Right ventricle myocardium inferior (tissue), 1 donor: ENCODE measurements at regions of chr21 and their contacts with region 1.

Region 1: GRCh38 chr21:37563641-37564340 is 197.2 kb downstream of the DYRK1A start:
- DNase-seq: peak; percentile 97
- ATAC-seq: peak; percentile 95

Region 2: GRCh38 chr21:37072988-37073416 is 490.8 kb before region 1 on chr21 and contains the starts of genes PIGP and TTC3:
- intact Hi-C with region 1: loop called (anchors 5 kb)
- DNase-seq: peak; percentile 94
- ATAC-seq: peak; percentile 94
- total RNA-seq, gene PIGP: 40.1 TPM
- total RNA-seq, gene TTC3: 35.8 TPM

Region 3: DNA sequence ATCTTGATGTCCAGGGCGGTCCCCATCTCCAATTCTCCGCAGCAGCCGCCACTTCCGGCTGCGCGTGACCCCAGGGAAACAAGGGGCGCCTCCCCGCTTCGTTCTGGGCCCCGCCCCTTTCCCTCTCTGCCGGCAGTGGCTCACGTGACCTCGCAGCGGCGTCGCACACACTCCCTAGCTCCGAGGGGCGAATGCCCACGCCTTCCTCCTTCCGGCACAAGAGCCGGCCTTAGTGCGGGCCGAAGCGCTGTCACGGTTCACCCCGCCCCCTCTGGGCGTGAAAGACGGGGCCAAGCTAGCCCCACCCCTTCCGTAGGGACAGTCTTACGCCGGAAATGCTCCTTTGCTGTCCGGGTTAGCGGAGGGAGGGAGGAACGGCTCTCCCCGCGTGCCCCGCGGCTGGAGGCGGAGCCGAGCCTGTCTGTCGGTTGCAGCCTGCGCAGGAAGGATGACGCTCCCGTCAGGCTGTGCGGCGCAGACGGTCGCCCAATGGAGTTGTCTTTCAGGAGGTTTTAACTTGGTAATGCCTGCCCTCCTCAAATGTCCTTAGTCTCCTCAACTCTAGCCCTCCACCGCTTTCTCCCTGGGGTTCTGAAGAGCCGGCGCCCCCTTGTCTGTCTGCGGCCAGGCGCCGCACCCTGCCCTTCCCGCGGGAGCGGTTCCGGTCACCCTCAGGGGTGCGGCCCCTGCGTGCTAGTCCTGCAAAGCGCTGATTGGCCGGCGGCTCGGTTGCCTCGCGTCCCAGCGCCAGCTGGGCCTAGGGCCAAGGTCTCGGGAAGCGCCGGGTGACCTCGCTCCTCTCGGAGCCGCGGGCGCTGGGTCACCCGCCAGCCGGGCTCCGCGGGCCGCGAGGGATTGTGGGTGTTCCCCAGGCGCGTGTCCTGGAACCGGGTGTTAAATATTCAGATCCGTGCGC is 296.3 kb before region 1 on chr21 and contains the start of gene VPS26C:
- intact Hi-C with region 1: loop called (anchors 5 kb)
- DNase-seq: peak; percentile 99
- ATAC-seq: peak; percentile 97
- total RNA-seq, gene VPS26C: 49.7 TPM

Region 4: GRCh38 chr21:37430184-37430821 is 133.5 kb before region 1 on chr21:
- intact Hi-C with region 1: no loop called
- DNase-seq: no peak
- ATAC-seq: peak; percentile 47

Region 5: DNA sequence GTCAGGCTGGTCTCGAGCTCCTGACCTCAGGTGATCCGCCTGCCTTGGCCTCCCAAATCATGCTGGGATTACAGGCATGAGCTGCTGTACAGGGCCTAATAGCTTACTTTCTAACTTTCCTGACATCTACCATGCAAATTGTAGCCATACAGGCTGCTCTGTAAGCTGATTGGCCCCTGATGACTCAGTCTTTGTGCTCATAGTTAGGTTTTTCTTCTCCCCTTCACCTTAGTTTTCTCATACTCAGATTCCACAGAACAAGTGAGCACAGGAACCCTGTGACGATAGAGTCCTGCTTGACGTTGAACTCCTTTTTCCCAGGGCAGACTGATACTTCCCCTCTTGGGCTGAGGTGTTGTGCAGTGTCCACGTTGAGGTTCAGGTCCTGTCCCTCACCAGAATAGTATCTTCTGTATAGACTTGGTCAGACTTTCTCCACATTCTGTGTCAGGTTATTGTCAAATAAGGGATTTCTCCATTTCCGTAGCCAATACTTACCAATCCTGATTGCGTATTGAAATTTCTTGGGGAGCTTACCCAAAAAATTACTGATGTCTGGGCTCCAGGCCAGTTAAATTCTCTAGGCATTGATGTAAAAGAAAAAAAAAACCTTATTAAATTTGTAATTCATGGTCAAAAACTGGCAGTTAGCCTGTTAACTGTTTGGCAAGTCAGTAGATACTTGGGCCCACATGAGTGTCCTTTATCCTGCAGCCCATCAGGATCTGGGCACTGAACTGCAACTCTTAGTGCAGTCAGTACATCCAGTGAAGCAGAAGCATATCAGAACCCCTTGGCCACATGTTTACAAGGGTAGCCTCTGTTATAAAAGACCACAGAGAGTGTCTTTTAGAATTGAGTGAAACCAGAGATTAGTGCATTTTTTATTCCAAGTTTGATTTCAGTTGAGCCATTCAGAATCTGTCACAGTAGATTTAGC is 79.0 kb before region 1 on chr21:
- intact Hi-C with region 1: loop called (anchors 5 kb)
- DNase-seq: no peak
- ATAC-seq: peak; percentile 75

Region 6: DNA sequence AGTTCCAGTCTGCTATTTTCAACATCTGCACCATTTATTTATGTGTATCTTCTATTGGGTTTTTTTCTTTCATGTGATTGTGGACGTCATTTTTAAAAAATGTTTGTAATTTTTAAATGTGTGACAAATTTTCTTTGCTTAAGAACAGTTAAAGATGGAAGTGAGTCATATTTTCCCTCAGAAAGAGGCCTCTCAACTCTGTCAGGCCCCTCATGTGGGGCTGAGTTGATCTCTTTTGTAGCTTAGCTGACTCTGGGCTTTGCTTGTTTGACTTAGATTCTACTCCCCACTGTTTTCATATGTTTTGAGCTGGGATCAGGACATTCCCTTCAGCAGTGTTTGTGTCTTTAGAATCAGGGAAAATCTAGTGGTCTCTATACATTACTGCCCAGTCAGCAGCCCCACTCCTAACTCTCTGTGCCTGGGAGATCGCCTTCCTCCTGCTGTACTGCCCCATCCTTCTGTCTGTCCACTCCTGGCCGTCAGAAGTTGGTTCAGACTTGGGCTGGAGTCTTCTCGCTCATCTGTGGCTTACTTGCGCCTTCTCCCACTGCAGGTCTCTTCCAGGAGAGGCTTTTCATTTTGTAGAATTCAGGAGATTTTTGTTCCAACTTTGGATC is 59.8 kb before region 1 on chr21:
- intact Hi-C with region 1: loop called (anchors 5 kb)
- DNase-seq: no peak
- ATAC-seq: no peak

Region 7: DNA sequence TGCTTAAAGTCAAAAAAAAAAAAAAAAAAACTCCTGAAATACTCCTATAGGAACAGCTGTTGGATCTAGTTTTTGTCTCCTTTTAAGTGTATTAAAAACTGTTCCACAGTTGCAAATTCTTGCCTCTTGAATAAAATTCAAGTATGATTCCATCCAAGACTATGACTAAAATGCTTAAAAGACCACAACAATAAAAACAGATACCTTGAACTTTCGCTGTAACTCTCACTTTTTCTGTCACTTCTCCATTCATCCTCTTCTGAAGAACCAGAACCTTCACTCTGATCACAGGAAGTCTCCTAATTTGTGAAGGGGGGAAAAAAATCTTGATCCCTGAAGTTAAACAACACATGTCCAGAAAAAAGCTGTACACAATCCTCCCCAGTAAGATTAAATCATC is 1674.5 kb after region 1 on chr21:
- intact Hi-C with region 1: no loop called
- DNase-seq: no peak
- ATAC-seq: no peak